Endothelial cell of umbilical vein (primary cell): ENCODE measurements at regions of chr15 and their contacts with region 1.

Region 1: DNA sequence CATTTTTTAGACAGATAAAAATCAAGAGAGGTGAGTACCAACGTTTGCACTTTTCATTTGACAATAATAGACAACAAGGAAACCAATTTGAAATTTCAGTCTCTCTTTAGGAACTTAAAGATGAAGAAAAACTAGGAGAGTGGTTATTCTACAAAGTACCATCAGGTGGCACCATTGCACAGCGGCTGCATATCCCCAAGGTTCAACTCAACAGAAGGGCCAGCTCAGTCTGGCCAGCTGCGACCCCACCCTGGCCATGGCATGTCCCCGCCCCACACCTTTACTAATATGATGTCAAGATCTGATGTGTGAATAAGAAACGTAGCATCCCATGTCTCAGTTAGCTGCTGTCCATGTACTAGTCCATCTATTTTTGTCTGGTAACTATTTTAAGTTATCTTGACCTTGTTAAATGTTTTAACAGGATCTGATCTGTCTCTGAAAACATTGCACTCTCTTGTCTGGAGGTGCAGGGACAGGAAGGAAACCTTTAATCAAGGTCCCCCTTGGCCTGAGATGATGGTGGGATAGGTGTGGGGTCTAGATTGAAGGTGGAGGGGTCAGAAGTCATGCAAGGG is 35.5 kb upstream of the CGNL1 start:
- DNase-seq: peak; percentile 82
- H3K4me3 ChIP-seq: no peak overlapping the region
- H3K27ac ChIP-seq: no peak overlapping the region
- H3K4me1 ChIP-seq: peaks cover 38% of the 10 kb centered on the region
- H3K27me3 ChIP-seq: no peaks in the 10 kb centered on the region
- CTCF ChIP-seq: peak; percentile 59 to 72
- POLR2A ChIP-seq: no peak

Region 2: DNA sequence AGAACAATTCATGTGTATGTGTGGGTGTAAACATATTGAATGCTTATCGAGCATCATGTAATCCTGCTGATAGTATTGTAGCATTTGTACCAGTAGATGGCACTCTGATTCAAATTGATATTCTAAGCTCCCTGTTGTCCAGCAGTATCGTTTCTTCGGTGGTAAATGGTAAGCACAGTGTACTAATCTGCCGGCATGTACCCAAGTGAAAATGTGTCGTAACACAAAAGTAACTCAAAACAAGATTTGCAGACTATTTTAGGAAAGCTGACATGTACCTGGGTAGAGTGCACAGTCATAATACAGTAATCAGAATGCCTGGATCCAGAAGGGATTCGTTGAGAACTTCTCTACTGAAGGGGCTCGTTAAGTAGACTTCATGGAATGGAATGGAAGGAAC is 844.1 kb before region 1 on chr15:
- CTCF ChIA-PET with region 1: interaction called, 5 read pairs
- POLR2A ChIA-PET with region 1: no interaction called
- dilution Hi-C with region 1: no loop called
- intact Hi-C with region 1: loop called (anchors 1 kb)
- DNase-seq: peak; percentile 78
- H3K4me3 ChIP-seq: no peak overlapping the region
- H3K27ac ChIP-seq: no peak overlapping the region
- H3K4me1 ChIP-seq: no peaks in the 10 kb centered on the region
- H3K27me3 ChIP-seq: peaks cover 7 to 19% of the 10 kb centered on the region in 2 experiments
- CTCF ChIP-seq: peak; percentile 43 to 47
- POLR2A ChIP-seq: no peak

Region 3: GRCh38 chr15:57146506-57147201 is 194.1 kb before region 1 on chr15:
- CTCF ChIA-PET with region 1: interaction called, 30 read pairs
- POLR2A ChIA-PET with region 1: no interaction called
- dilution Hi-C with region 1: no loop called
- intact Hi-C with region 1: loop called (anchors 1 kb)
- DNase-seq: peak; percentile 69
- H3K4me3 ChIP-seq: no peak overlapping the region
- H3K27ac ChIP-seq: peak overlapping the region; percentile 63
- H3K4me1 ChIP-seq: peaks cover 24% of the 10 kb centered on the region
- H3K27me3 ChIP-seq: no peaks in the 10 kb centered on the region
- CTCF ChIP-seq: peak; percentile 40 to 45
- POLR2A ChIP-seq: no peak

Region 4: DNA sequence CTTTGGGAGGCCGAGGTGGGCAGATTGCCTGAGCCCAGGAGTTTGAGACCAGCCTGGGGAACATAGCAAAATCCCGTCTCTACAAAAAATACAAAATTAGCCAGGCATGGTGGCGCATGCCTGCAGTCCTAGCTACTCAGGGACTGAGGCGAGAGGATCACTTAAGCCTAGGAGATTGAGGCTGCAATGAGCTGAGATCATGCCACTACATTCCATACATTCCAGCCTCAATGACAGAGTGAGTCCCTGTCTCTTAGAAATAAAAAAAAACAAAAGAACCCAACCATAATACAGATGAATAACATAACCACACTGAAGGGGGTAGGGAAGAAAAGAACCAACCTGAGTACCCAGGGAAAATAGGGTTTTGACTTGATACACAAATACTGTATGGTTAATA is 15.9 kb after region 1 on chr15:
- CTCF ChIA-PET with region 1: interaction called, 15 read pairs
- POLR2A ChIA-PET with region 1: no interaction called
- dilution Hi-C with region 1: no loop called
- intact Hi-C with region 1: no loop called
- DNase-seq: peak; percentile 22
- H3K4me3 ChIP-seq: no peak overlapping the region
- H3K27ac ChIP-seq: no peak overlapping the region
- H3K4me1 ChIP-seq: no peaks in the 10 kb centered on the region
- H3K27me3 ChIP-seq: no peaks in the 10 kb centered on the region
- CTCF ChIP-seq: no peak
- POLR2A ChIP-seq: no peak

Region 5: GRCh38 chr15:57505949-57506391 is 165.2 kb after region 1 on chr15:
- CTCF ChIA-PET with region 1: interaction called, 12 read pairs
- POLR2A ChIA-PET with region 1: no interaction called
- dilution Hi-C with region 1: no loop called
- intact Hi-C with region 1: no loop called
- DNase-seq: peak; percentile 92
- H3K4me3 ChIP-seq: no peak overlapping the region
- H3K27ac ChIP-seq: peak overlapping the region; percentile 83
- H3K4me1 ChIP-seq: peaks cover 36% of the 10 kb centered on the region
- H3K27me3 ChIP-seq: no peaks in the 10 kb centered on the region
- CTCF ChIP-seq: no peak
- POLR2A ChIP-seq: peak; percentile 18

Region 6: GRCh38 chr15:57541805-57542504 is 201.2 kb after region 1 on chr15:
- CTCF ChIA-PET with region 1: interaction called, 162 read pairs
- POLR2A ChIA-PET with region 1: no interaction called
- dilution Hi-C with region 1: loop called (anchors 25 kb)
- intact Hi-C with region 1: loop called (anchors 1 kb)
- DNase-seq: peak; percentile 77
- H3K4me3 ChIP-seq: no peak overlapping the region
- H3K27ac ChIP-seq: no peak overlapping the region
- H3K4me1 ChIP-seq: peaks cover 6% of the 10 kb centered on the region
- H3K27me3 ChIP-seq: no peaks in the 10 kb centered on the region
- CTCF ChIP-seq: peak; percentile 82 to 91
- POLR2A ChIP-seq: no peak

Region 7: GRCh38 chr15:57706405-57707209 is 365.8 kb after region 1 on chr15 and contains the start of gene POLR2M:
- CTCF ChIA-PET with region 1: no interaction called
- POLR2A ChIA-PET with region 1: no interaction called
- dilution Hi-C with region 1: no loop called
- intact Hi-C with region 1: loop called (anchors 2 kb)
- DNase-seq: peak; percentile 99
- H3K4me3 ChIP-seq: peak within 1 kb of the TSS; percentile 18 to 71 (median 59)
- H3K27ac ChIP-seq: peak within 1 kb of the TSS; percentile 74
- H3K4me1 ChIP-seq: peaks cover 16% of the 10 kb centered on the region
- H3K27me3 ChIP-seq: no peaks in the 10 kb centered on the region
- CTCF ChIP-seq: no peak
- POLR2A ChIP-seq: peak; percentile 63
- total RNA-seq, gene POLR2M: 42.5 and 50.6 TPM in 2 replicates

Region 8: DNA sequence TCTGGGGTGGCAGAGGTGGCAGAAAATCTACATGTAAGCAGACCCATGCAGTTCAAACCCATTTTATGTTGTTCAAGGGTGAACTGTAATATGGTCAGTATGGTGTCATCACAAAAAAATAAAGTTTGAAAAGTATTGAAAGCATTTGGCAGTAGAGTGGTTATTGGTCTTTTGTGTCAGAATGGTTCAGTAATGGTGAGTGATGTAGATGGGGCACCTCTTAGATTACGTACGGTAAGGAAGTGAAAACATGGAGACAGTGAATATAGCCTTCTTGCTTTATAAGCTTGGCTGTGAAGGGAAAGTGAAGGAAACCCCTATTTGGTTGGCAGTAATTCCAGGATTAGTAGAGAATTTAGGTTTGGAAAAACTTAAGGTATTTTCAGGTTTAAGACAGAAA is 1747.0 kb after region 1 on chr15:
- CTCF ChIA-PET with region 1: no interaction called
- POLR2A ChIA-PET with region 1: no interaction called
- dilution Hi-C with region 1: no loop called
- intact Hi-C with region 1: no loop called
- DNase-seq: no peak
- H3K4me3 ChIP-seq: no peak overlapping the region
- H3K27ac ChIP-seq: no peak overlapping the region
- H3K4me1 ChIP-seq: no peaks in the 10 kb centered on the region
- H3K27me3 ChIP-seq: no peaks in the 10 kb centered on the region
- CTCF ChIP-seq: no peak
- POLR2A ChIP-seq: no peak